Dendritic cell treated with granulocyte-macrophage colony-stimulating factor and Interleukin-4, amounts not matched to agents 40 ng/mL and 50 ng/mL, for 4 days (primary cell): ENCODE measurements at regions of chr15 and their contacts with region 1.

Region 1: GRCh38 chr15:70097337-70098169 is at the start of gene TLE3:
- H3K4me3 Mint-ChIP-seq: peak within 1 kb of the TSS; percentile 96
- H3K27ac Mint-ChIP-seq: peak within 1 kb of the TSS; percentile 98
- H3K4me1 Mint-ChIP-seq: peaks cover 71% of the 10 kb centered on the region
- H3K27me3 Mint-ChIP-seq: peaks cover 29% of the 10 kb centered on the region

Region 2: GRCh38 chr15:69666411-69666882 is 431.1 kb before region 1 on chr15:
- intact Hi-C with region 1: loop called (anchors 5 kb)
- H3K4me3 Mint-ChIP-seq: peak overlapping the region; percentile 56
- H3K27ac Mint-ChIP-seq: peak overlapping the region; percentile 84
- H3K4me1 Mint-ChIP-seq: peaks cover 64% of the 10 kb centered on the region
- H3K27me3 Mint-ChIP-seq: peaks cover 11% of the 10 kb centered on the region

Region 3: DNA sequence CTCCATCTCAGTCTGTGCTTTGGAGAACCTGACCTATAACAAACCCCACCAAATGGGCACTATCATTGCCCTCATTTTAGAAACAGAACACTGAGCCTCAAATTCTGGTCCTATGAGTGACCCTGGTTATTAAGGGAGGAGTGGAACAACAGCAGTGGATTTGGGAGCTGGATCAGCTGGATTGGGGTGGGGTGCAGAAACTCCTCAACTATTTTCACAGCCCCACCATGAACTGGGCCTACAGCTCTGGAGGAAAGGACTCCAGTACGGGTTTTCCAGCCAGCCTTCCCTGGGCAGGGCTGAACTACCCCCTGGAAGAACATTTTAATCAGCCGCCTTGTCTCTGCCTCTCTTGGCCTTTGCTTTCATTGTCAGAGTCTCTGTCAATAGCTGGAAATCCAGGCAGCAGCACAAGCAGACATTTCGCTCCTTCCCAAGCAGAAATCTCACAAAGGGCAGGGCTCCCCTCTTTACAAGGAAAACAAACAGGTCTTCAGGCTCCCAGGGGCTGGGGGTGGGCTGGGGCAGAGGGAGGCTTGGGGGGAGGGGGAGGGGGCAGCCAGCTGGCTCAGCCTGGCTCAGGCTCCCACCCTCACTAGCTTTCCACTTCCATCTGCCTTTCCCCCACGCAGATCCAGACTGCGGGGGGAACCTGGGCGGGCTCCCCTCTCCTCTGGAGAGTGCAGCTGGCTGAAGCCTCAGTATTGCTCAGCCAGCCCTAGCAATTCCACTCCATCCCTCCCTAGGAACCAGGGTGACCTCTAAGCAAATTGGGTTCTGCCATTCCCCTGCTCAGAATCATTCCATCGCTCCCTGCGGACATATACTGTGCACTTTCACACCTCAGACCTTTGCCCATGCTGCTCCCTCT is 13.9 kb after region 1 on chr15:
- intact Hi-C with region 1: loop called (anchors 1 kb)
- H3K4me3 Mint-ChIP-seq: no peak overlapping the region
- H3K27ac Mint-ChIP-seq: peak overlapping the region; percentile 46
- H3K4me1 Mint-ChIP-seq: peaks cover 71% of the 10 kb centered on the region
- H3K27me3 Mint-ChIP-seq: peaks cover 25% of the 10 kb centered on the region

Region 4: DNA sequence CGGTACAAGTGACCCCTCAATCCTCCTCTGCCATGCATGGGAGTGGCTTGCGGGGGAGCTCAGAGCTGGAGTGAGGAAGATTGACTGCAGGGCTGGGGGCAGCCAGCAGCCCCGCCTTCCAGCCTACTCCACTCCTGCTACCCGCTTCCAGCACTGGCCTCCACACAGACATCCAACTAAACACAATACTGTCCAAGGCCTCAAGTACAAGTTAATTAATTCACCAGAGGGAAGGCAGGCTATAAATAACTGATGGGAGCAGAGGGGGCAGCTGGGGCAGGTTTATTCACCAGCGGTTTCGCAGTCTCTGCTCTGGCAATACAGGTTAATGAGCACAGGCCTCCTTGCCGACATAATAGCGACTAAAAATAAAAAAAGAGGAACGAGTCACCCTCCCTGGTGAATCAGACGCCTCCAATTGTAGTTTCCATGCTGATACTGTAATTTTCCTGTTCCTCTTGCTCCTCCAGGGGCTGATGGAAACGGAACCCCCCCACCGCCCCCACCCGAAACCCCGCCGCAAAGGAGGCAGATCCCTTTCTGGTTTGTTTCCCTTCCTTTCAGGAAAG is 166.5 kb after region 1 on chr15:
- intact Hi-C with region 1: loop called (anchors 5 kb)
- H3K4me3 Mint-ChIP-seq: no peak overlapping the region
- H3K27ac Mint-ChIP-seq: peak overlapping the region; percentile 86
- H3K4me1 Mint-ChIP-seq: peaks cover 96% of the 10 kb centered on the region
- H3K27me3 Mint-ChIP-seq: peaks cover 51% of the 10 kb centered on the region

Region 5: GRCh38 chr15:70480196-70480856 is 382.8 kb after region 1 on chr15:
- intact Hi-C with region 1: loop called (anchors 5 kb)
- H3K4me3 Mint-ChIP-seq: no peak overlapping the region
- H3K27ac Mint-ChIP-seq: peak overlapping the region; percentile 71
- H3K4me1 Mint-ChIP-seq: peaks cover 82% of the 10 kb centered on the region
- H3K27me3 Mint-ChIP-seq: peaks cover 38% of the 10 kb centered on the region